ENCODE measurements at regions of chr1 and their contacts with region 1.

Region 1: GRCh38 chr1:59296358-59297256 is at the start of gene FGGY:
- DNase-seq: peak; percentile 97
- ATAC-seq: peak; percentile 89
- H3K4me3 ChIP-seq: peak within 1 kb of the TSS; percentile 63 to 92 (median 87)
- H3K4me3 Mint-ChIP-seq: peak within 1 kb of the TSS; percentile 91
- H3K27ac ChIP-seq: peak within 1 kb of the TSS; percentile 96 to 98
- H3K27ac Mint-ChIP-seq: peak within 1 kb of the TSS; percentile 98
- H3K4me1 ChIP-seq: peaks cover 22 to 25% of the 10 kb centered on the region in 2 donors
- H3K4me1 Mint-ChIP-seq: peaks cover 44% of the 10 kb centered on the region
- H3K27me3 ChIP-seq: no peaks in the 10 kb centered on the region
- H3K27me3 Mint-ChIP-seq: no peaks in the 10 kb centered on the region
- CTCF ChIP-seq: no peak
- total RNA-seq, gene FGGY: 34.0 and 38.5 TPM in 2 replicates

Region 2: DNA sequence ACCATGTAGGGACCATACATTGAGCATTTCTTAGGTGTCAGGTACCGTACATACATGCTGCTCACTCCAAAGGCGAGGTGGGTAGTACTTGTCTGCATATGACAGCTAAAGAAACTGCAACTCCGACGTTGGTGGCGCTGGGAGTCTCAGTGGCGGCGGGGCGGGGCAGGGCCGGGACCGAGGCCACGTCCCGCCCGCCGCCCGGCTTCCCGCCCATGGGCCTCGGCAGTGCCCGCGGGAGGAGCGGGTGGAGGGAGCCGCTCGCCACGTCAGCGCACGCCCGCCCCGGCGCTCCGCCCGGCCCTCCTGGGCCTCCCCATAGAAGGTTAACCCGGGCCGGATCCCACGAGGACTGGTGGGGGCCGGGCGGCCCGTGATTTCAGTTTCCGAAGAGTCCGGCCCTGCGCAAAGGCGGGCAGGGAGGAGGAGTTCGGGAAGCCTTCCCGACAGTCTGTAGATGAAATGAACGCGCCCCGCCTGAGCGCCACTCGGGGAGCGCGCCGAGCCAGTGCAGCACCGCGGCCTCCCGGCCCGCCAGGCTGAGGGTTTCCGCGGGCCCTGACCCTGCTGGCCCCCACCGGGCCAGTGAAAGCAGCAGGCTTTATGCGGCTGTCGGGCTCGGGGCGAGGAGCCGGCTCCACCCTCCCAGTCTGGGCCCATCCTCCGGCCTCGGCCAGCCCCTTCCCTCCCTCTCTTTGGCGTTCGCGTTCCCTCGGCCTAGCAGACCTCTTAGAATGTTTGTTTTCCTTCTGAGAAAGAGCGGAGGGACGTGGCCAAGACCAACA is 392.9 kb before region 1 on chr1:
- CTCF ChIA-PET with region 1: interaction called, 3 read pairs
- POLR2A ChIA-PET with region 1: no interaction called
- intact Hi-C with region 1: loop called (anchors 2 kb)
- DNase-seq: peak; percentile 77
- ATAC-seq: peak; percentile 88
- H3K4me3 ChIP-seq: peak overlapping the region; percentile 45 to 74 (median 60)
- H3K4me3 Mint-ChIP-seq: peak overlapping the region; percentile 85
- H3K27ac ChIP-seq: peak overlapping the region; percentile 49 to 82
- H3K27ac Mint-ChIP-seq: peak overlapping the region; percentile 86
- H3K4me1 ChIP-seq: peaks cover 10% of the 10 kb centered on the region in 2 donors
- H3K4me1 Mint-ChIP-seq: peaks cover 13% of the 10 kb centered on the region
- H3K27me3 ChIP-seq: no peaks in the 10 kb centered on the region
- H3K27me3 Mint-ChIP-seq: no peaks in the 10 kb centered on the region
- CTCF ChIP-seq: no peak

Region 3: DNA sequence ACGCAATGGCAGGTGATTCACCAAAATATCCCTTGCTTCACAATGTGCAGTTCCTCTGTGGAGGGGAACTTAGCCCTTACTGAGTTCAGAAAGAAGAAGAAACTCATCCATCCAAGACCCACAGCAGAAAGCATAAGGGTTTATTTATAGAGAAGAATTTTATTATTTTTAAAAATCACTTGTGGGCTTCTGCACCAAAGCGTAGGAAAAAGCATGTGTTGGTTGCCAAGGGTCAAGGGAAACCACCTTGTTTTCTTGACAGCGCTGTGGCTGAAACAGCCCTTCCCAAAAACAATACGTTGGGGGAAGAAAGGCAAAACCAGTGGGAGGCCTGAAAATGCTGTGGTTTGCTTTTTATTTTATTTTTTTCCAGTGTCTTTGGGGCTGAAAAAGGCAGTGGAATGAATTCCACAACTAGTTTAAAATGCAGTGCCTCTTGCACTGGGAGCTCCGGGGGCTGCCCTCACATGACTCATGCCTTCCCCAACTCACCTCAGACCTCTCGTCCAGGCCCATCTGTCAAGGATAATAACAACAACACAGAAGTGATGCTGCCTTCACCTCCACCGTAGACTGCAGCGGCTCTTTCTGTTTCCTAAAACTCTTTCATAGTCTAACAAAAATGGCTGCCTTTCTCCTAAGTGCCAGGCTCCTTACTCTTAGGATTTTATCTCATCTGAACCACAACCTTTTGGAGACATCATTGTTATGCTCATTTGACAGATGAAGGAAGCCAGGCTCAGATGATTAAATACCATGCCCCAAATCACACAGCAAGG is 288.6 kb before region 1 on chr1:
- CTCF ChIA-PET with region 1: no interaction called
- POLR2A ChIA-PET with region 1: no interaction called
- intact Hi-C with region 1: loop called (anchors 5 kb)
- DNase-seq: peak; percentile 57
- ATAC-seq: peak; percentile 68
- H3K4me3 ChIP-seq: peak overlapping the region in 3 of 5 experiments; percentile 0 to 44 (median 6)
- H3K4me3 Mint-ChIP-seq: peak overlapping the region; percentile 55
- H3K27ac ChIP-seq: peak overlapping the region; percentile 70 to 85
- H3K27ac Mint-ChIP-seq: peak overlapping the region; percentile 90
- H3K4me1 ChIP-seq: peaks cover 62 to 70% of the 10 kb centered on the region in 2 donors
- H3K4me1 Mint-ChIP-seq: peaks cover 80% of the 10 kb centered on the region
- H3K27me3 ChIP-seq: no peaks in the 10 kb centered on the region
- H3K27me3 Mint-ChIP-seq: no peaks in the 10 kb centered on the region
- CTCF ChIP-seq: no peak

Region 4: GRCh38 chr1:59071289-59071688 is 225.3 kb before region 1 on chr1:
- CTCF ChIA-PET with region 1: interaction called, 5 read pairs
- POLR2A ChIA-PET with region 1: no interaction called
- intact Hi-C with region 1: loop called (anchors 5 kb)
- DNase-seq: peak; percentile 40
- ATAC-seq: peak; percentile 28
- H3K4me3 ChIP-seq: no peak overlapping the region
- H3K4me3 Mint-ChIP-seq: peak overlapping the region; percentile 67
- H3K27ac ChIP-seq: peak overlapping the region; percentile 22 to 31
- H3K27ac Mint-ChIP-seq: peak overlapping the region; percentile 88
- H3K4me1 ChIP-seq: peaks cover 22 to 23% of the 10 kb centered on the region in 2 donors
- H3K4me1 Mint-ChIP-seq: peaks cover 27% of the 10 kb centered on the region
- H3K27me3 ChIP-seq: no peaks in the 10 kb centered on the region
- H3K27me3 Mint-ChIP-seq: no peaks in the 10 kb centered on the region
- CTCF ChIP-seq: no peak

Region 5: GRCh38 chr1:59266180-59266926 is 30.3 kb before region 1 on chr1:
- CTCF ChIA-PET with region 1: interaction called, 8 read pairs
- POLR2A ChIA-PET with region 1: interaction called, 4 read pairs
- intact Hi-C with region 1: loop called (anchors 1 kb)
- DNase-seq: peak; percentile 85
- ATAC-seq: peak; percentile 96
- H3K4me3 ChIP-seq: peak overlapping the region in 1 of 5 experiments; percentile 24
- H3K4me3 Mint-ChIP-seq: peak overlapping the region; percentile 35
- H3K27ac ChIP-seq: peak overlapping the region; percentile 48 to 76
- H3K27ac Mint-ChIP-seq: peak overlapping the region; percentile 95
- H3K4me1 ChIP-seq: peaks cover 22 to 34% of the 10 kb centered on the region in 2 donors
- H3K4me1 Mint-ChIP-seq: peaks cover 39% of the 10 kb centered on the region
- H3K27me3 ChIP-seq: no peaks in the 10 kb centered on the region
- H3K27me3 Mint-ChIP-seq: no peaks in the 10 kb centered on the region
- CTCF ChIP-seq: no peak

Region 6: DNA sequence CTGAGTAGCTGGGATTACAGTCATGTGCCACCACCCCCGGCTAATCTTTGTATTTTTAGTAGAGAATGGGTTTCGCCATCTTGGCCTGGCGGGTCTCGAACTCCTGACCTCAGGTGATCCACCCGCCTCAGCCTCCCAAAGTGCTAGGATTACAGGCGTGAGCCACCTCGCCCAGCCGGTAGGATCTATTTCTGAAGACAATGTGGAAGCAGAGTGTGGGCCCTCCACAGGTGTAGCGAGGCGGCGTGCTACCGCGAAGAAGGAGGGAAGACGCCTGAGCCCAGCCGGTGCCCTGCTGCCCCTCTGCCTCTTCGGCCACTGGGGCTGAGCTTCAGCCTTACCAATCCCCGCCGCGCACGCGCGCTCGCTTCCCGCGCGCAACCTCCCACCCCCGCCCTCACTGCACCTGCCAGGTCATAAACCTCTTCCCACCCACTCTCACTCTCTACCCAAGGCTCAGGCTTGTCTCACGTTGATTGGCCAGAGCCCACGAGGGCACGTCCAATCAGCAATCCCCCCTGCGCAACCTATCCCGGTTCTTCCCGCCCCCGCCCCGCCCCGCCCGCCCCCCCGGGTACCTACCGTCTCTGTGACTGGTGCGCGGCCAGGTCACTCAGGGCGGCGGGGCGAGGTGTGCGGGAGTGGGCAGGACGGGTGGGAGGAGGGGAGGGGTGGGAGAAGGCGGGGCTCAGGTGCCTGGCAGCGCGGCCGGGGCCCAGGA is 517.7 kb after region 1 on chr1:
- CTCF ChIA-PET with region 1: no interaction called
- POLR2A ChIA-PET with region 1: no interaction called
- intact Hi-C with region 1: loop called (anchors 10 kb)
- DNase-seq: peak; percentile 95
- ATAC-seq: peak; percentile 93
- H3K4me3 ChIP-seq: peak overlapping the region; percentile 15 to 74 (median 66)
- H3K4me3 Mint-ChIP-seq: no peak overlapping the region
- H3K27ac ChIP-seq: peak overlapping the region; percentile 31 to 65
- H3K27ac Mint-ChIP-seq: peak overlapping the region; percentile 89
- H3K4me1 ChIP-seq: peaks cover 11 to 17% of the 10 kb centered on the region in 2 donors
- H3K4me1 Mint-ChIP-seq: peaks cover 4% of the 10 kb centered on the region
- H3K27me3 ChIP-seq: peaks cover 0 to 8% (median 0%) of the 10 kb centered on the region in 4 experiments
- H3K27me3 Mint-ChIP-seq: peaks cover 12% of the 10 kb centered on the region
- CTCF ChIP-seq: no peak

Measured in B cell (primary cell).